ENCODE measurements at regions of chrX and their contacts with region 1.

Region 1: GRCh38 chrX:152632445-152633097 is 5.1 kb upstream of the GABRQ start:
- DNase-seq: peak; percentile 69
- ATAC-seq: no peak
- H3K4me3 ChIP-seq: no peak overlapping the region
- H3K27ac ChIP-seq: no peak overlapping the region
- H3K4me1 ChIP-seq: no peaks in the 10 kb centered on the region
- H3K27me3 ChIP-seq: peaks cover 32% of the 10 kb centered on the region
- CTCF ChIP-seq: peak; percentile 81

Region 2: GRCh38 chrX:152821145-152821765 is 188.7 kb after region 1 on chrX:
- CTCF ChIA-PET with region 1: no interaction called
- POLR2A ChIA-PET with region 1: no interaction called
- intact Hi-C with region 1: loop called (anchors 10 kb)
- DNase-seq: peak; percentile 65
- ATAC-seq: no peak
- H3K4me3 ChIP-seq: no peak overlapping the region
- H3K27ac ChIP-seq: no peak overlapping the region
- H3K4me1 ChIP-seq: peaks cover 60% of the 10 kb centered on the region
- H3K27me3 ChIP-seq: no peaks in the 10 kb centered on the region
- CTCF ChIP-seq: peak; percentile 80

Measured in PC-3 (cell line).